PC-3 (cell line): ENCODE measurements at regions of chr5 and their contacts with region 1.

Region 1: GRCh38 chr5:107968998-107969397 is 298.3 kb upstream of the EFNA5 start:
- DNase-seq: peak; percentile 88
- ATAC-seq: peak; percentile 68
- H3K4me3 ChIP-seq: peak overlapping the region; percentile 39
- H3K27ac ChIP-seq: peak overlapping the region; percentile 91
- H3K4me1 ChIP-seq: peaks cover 52% of the 10 kb centered on the region
- H3K27me3 ChIP-seq: no peaks in the 10 kb centered on the region
- CTCF ChIP-seq: no peak

Region 2: GRCh38 chr5:107808671-107809137 is 160.3 kb before region 1 on chr5:
- CTCF ChIA-PET with region 1: no interaction called
- POLR2A ChIA-PET with region 1: no interaction called
- intact Hi-C with region 1: loop called (anchors 2 kb)
- DNase-seq: no peak
- ATAC-seq: no peak
- H3K4me3 ChIP-seq: no peak overlapping the region
- H3K27ac ChIP-seq: no peak overlapping the region
- H3K4me1 ChIP-seq: peaks cover 22% of the 10 kb centered on the region
- H3K27me3 ChIP-seq: no peaks in the 10 kb centered on the region
- CTCF ChIP-seq: no peak

Region 3: GRCh38 chr5:107869438-107870115 is 99.4 kb before region 1 on chr5:
- CTCF ChIA-PET with region 1: no interaction called
- POLR2A ChIA-PET with region 1: no interaction called
- intact Hi-C with region 1: loop called (anchors 2 kb)
- DNase-seq: peak; percentile 96
- ATAC-seq: peak; percentile 93
- H3K4me3 ChIP-seq: peak overlapping the region; percentile 7; the same call in 1 of the 2 replicates
- H3K27ac ChIP-seq: peak overlapping the region; percentile 81
- H3K4me1 ChIP-seq: peaks cover 30% of the 10 kb centered on the region
- H3K27me3 ChIP-seq: no peaks in the 10 kb centered on the region
- CTCF ChIP-seq: no peak

Region 4: GRCh38 chr5:108345541-108346171 is 376.7 kb after region 1 on chr5:
- CTCF ChIA-PET with region 1: no interaction called
- POLR2A ChIA-PET with region 1: no interaction called
- intact Hi-C with region 1: no loop called
- DNase-seq: peak; percentile 77
- ATAC-seq: peak; percentile 88
- H3K4me3 ChIP-seq: no peak overlapping the region
- H3K27ac ChIP-seq: no peak overlapping the region
- H3K4me1 ChIP-seq: no peaks in the 10 kb centered on the region
- H3K27me3 ChIP-seq: no peaks in the 10 kb centered on the region
- CTCF ChIP-seq: peak; percentile 87